ENCODE measurements at regions of chr5 and their contacts with region 1.

Region 1: GRCh38 chr5:108748401-108749127 is 867 bp downstream of the FER start:
- DNase-seq: peak; percentile 97 to 99 (median 98)
- H3K4me3 ChIP-seq: peak overlapping the region; percentile 82 to 87
- H3K4me3 Mint-ChIP-seq: peak overlapping the region; percentile 91 to 94 (median 92)
- H3K27ac ChIP-seq: peak overlapping the region; percentile 86
- H3K27ac Mint-ChIP-seq: peak overlapping the region; percentile 88 to 98 (median 97)
- H3K4me1 ChIP-seq: peaks cover 19% of the 10 kb centered on the region
- H3K4me1 Mint-ChIP-seq: peaks cover 7 to 20% (median 12%) of the 10 kb centered on the region in 4 donors
- H3K27me3 ChIP-seq: no peaks in the 10 kb centered on the region
- H3K27me3 Mint-ChIP-seq: peaks cover 0 to 5% of the 10 kb centered on the region in 2 donors

Region 2: GRCh38 chr5:108381954-108382783 is 366.4 kb before region 1 on chr5 and contains the start of gene FBXL17:
- CTCF ChIA-PET with region 1: no interaction called
- POLR2A ChIA-PET with region 1: interaction called, 18 read pairs
- intact Hi-C with region 1: loop called (anchors 1 kb)
- DNase-seq: peak; percentile 92 to 96 (median 94)
- H3K4me3 ChIP-seq: peak within 1 kb of the TSS; percentile 71 to 82
- H3K4me3 Mint-ChIP-seq: peak within 1 kb of the TSS; percentile 86 to 98 (median 90)
- H3K27ac ChIP-seq: peak within 1 kb of the TSS; percentile 91
- H3K27ac Mint-ChIP-seq: peak within 1 kb of the TSS; percentile 87 to 99 (median 98)
- H3K4me1 ChIP-seq: peaks cover 36% of the 10 kb centered on the region
- H3K4me1 Mint-ChIP-seq: peaks cover 25 to 47% (median 34%) of the 10 kb centered on the region in 4 donors
- H3K27me3 ChIP-seq: no peaks in the 10 kb centered on the region
- H3K27me3 Mint-ChIP-seq: no peaks in the 10 kb centered on the region
- total RNA-seq, gene FBXL17: 23.3 to 27.5 TPM

Region 3: DNA sequence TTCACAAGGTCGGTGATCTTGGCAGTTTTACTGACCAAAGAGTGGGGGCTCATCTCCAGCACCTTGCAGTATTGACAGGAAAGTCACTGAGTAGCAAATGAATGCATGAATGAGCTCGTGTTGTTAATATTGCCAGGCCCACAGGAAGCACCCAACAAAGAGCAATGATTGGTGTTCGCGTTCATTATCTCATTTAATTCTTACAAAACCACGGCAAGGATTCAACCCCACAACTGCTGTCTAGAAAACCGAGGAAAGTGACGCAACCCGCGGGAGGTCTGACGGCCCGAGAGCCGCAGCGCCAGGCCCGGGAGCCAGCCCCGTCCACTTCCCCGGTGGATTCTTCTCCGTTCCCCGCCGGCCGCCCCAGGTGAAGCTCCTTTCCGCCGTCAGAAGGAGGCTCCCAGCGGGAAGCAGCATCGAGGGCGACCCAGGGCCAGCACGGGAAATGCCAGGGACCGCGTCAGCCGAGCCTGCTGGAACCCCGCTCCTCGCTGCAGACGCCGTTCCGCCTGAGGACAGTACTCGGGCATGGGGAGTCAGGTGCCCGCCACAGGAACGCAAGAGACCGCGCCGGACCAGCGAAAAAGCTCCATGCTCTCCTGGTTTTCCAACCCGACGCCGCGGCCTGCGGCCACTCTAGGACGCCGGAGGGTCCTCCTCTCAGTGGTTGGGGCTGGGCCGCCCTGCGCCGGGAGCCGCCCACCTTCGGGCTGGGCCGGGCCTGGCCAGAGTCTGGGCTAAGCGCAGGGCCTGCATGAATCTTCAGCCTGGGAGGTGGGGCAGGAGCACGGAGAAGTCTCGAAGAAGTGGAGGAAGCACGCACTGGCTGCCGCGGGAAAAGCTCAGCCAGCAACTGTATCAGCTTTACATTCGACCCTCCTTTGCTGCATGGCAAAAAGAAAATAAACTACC is 20.7 kb before region 1 on chr5:
- CTCF ChIA-PET with region 1: interaction called, 5 read pairs
- POLR2A ChIA-PET with region 1: interaction called, 6 read pairs
- intact Hi-C with region 1: loop called (anchors 1 kb)
- DNase-seq: peak; percentile 28 to 66 (median 38)
- H3K4me3 ChIP-seq: peak overlapping the region; percentile 25 to 81
- H3K4me3 Mint-ChIP-seq: peak overlapping the region; percentile 80 to 95 (median 84)
- H3K27ac ChIP-seq: peak overlapping the region; percentile 44
- H3K27ac Mint-ChIP-seq: peak overlapping the region; percentile 75 to 95 (median 82)
- H3K4me1 ChIP-seq: peaks cover 8% of the 10 kb centered on the region
- H3K4me1 Mint-ChIP-seq: peaks cover 14 to 31% (median 23%) of the 10 kb centered on the region in 4 donors
- H3K27me3 ChIP-seq: no peaks in the 10 kb centered on the region
- H3K27me3 Mint-ChIP-seq: peaks cover 10 to 12% of the 10 kb centered on the region in 2 donors

Measured in CD4-positive, alpha-beta memory T cell (primary cell).